WTC11 (cell line): ENCODE measurements at regions of chr6 and their contacts with region 1.

Region 1: DNA sequence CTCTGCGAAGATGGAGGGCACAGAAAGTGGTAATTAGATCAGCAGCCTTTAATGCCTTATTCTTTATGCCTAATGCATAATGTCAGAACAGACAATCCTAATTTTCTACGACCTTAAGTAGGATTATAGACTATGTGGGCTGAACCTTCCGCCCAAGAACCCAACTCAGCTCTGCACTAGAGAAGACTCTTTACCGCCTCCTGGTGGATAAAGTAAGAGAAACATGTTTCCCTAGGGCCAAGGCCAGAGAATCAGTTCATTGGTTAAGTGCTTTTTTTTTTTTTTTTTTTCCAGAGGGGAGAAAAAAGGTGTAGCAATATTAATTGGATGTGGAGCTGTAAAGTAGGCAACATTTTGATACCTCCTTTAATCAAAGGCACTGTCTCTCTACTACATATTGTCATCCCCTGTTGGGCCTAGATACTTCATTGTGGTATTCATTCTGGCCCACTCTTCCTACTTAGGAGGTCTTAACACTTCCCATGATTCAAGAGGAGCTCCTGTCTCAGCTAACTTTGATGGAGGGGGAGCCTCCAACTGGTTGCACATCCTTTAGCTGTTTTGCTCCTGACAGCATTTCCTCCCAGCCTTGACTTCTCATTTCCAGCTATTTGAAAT is 124.9 kb upstream of the NRN1 start:
- DNase-seq: peak; percentile 36
- ATAC-seq: peak; percentile 95
- H3K4me3 Mint-ChIP-seq: no peak overlapping the region
- H3K27ac Mint-ChIP-seq: no peak overlapping the region
- H3K4me1 Mint-ChIP-seq: 0 out of 2 replicates have a peak, but pooled peaks cover 2% of the 10 kb centered on the region
- H3K27me3 Mint-ChIP-seq: peaks cover 6% of the 10 kb centered on the region
- CTCF ChIP-seq: peak; percentile 61

Region 2: DNA sequence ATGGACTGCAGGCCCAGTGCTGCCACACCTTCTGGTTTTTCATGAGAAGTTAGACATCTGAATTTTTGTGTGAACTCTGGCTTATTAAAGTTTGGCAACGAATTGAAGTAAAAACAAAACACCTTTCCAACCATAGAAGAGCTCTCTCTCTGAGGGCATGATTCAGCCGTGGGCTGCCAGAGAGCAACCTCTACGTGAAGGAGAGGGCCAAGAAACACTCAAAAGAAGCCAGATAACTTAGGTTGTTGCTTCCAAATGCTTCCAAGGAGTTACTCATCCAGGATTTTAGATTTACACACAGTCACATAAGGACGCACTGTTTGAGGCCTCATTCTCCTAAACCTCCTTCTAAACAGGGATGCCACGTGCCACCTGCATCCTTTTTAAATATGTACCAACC is 190.4 kb before region 1 on chr6:
- CTCF ChIA-PET with region 1: no interaction called
- POLR2A ChIA-PET with region 1: no interaction called
- DNase-seq: no peak
- ATAC-seq: no peak
- H3K4me3 Mint-ChIP-seq: no peak overlapping the region
- H3K27ac Mint-ChIP-seq: no peak overlapping the region
- H3K4me1 Mint-ChIP-seq: no peaks in the 10 kb centered on the region
- H3K27me3 Mint-ChIP-seq: peaks cover 12% of the 10 kb centered on the region; the same call in 1 of the 2 replicates
- CTCF ChIP-seq: no peak

Region 3: DNA sequence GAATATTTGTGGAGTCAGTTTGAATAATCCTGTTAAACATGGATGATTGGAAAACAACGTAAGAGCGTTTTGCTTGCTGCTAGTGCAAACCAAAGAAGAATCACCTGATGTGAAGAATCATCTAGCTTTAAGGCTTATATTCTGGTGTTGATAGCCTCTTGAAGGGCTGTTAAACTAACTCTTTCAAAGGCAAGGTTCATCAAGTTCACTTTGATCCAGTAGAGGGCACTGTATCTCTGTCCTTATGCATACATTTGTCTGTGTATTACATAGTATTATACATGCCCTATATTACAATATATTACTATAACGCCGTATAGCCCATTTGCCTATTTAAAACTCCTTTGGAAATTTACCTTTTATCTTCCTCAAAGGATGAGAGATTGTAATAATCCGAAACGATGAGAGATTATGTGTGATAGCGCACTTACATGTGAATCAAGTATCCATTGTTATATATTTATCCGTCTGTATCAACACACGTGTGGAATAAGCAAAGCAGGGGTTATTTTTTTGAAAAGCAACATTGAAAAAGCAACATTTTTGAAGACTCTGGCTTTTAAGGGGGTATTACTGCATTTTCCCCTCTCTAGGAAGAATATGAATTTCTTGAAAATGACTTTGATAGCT is 74.1 kb before region 1 on chr6:
- CTCF ChIA-PET with region 1: interaction called, 21 read pairs
- POLR2A ChIA-PET with region 1: no interaction called
- DNase-seq: no peak
- ATAC-seq: peak; percentile 82
- H3K4me3 Mint-ChIP-seq: no peak overlapping the region
- H3K27ac Mint-ChIP-seq: no peak overlapping the region
- H3K4me1 Mint-ChIP-seq: no peaks in the 10 kb centered on the region
- H3K27me3 Mint-ChIP-seq: no peaks in the 10 kb centered on the region; the same call in 1 of the 2 replicates
- CTCF ChIP-seq: peak; percentile 29; the same call in 1 of the 2 replicates

Region 4: DNA sequence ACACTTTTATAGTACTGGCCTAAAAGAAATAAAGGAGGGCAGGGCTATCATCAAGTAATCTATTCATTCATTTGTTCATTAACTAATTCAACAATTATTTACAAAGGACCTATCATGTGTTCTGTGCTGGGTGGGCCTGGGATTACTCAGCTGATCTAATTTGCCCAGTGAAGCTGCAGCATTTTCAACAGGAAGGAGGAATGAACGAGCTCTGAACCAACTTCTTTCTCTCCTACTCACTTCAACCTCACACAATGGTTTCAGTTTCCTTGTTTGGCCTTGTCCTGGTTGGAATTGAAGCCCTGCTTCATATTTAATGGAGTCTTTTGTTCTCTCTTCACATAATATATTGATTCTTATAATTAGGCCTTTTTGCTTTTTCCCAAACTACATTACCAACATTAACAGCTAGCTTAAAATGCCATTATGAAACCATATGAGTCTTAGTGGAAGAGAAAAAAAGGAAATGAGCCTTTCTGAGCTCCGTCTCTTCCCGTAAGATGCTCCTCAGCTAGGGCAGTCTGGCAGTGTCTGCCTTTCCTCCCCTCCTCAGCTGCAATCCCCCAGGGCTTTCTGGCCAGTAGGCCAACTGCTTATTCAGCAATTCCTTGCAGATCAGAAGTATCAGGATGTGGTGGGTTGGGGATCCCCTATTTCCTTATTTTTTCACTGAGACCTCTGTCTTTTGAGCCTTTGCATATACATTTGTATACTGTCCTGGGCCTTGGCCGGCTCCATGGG is 45.5 kb before region 1 on chr6:
- CTCF ChIA-PET with region 1: no interaction called
- POLR2A ChIA-PET with region 1: no interaction called
- DNase-seq: no peak
- ATAC-seq: no peak
- H3K4me3 Mint-ChIP-seq: no peak overlapping the region
- H3K27ac Mint-ChIP-seq: no peak overlapping the region
- H3K4me1 Mint-ChIP-seq: no peaks in the 10 kb centered on the region
- H3K27me3 Mint-ChIP-seq: no peaks in the 10 kb centered on the region; the same call in 1 of the 2 replicates
- CTCF ChIP-seq: no peak

Region 5: DNA sequence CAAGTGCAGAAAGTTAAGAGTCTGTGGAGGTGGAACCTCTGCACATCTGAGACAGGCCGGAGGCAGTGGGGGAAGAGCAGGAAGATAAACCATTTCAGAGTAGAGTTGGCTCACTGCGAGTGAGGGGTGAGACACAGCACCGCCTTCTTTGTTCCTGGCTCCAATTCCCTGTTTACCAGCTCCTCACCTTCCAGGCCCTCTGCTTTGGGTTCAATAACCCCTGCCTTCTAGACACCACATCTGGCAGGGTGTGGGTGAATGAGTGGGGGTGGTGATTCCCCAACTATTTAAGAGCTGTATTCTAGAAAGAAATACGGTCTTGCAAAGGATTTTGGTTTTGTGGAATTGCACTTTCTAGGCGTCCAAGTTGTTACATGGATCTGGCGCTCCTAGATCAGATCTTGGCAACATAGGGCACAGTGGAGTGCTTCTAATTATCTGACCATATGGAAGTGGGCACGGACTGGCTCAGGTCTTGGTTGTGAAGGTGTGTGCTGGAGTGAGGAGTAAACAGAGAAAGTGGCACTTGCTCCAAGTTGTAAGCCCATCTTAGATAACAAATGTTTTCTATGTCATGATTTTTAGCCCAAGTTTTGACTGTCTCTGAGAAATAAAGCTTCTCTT is 16.7 kb after region 1 on chr6:
- CTCF ChIA-PET with region 1: interaction called, 12 read pairs
- POLR2A ChIA-PET with region 1: no interaction called
- DNase-seq: no peak
- ATAC-seq: no peak
- H3K4me3 Mint-ChIP-seq: no peak overlapping the region
- H3K27ac Mint-ChIP-seq: no peak overlapping the region
- H3K4me1 Mint-ChIP-seq: peaks cover 7% of the 10 kb centered on the region; the same call in 1 of the 2 replicates
- H3K27me3 Mint-ChIP-seq: no peaks in the 10 kb centered on the region; the same call in 1 of the 2 replicates
- CTCF ChIP-seq: no peak

Region 6: GRCh38 chr6:6461138-6461537 is 329.5 kb after region 1 on chr6:
- CTCF ChIA-PET with region 1: interaction called, 10 read pairs
- POLR2A ChIA-PET with region 1: no interaction called
- DNase-seq: no peak
- ATAC-seq: no peak
- H3K4me3 Mint-ChIP-seq: no peak overlapping the region
- H3K27ac Mint-ChIP-seq: no peak overlapping the region
- H3K4me1 Mint-ChIP-seq: no peaks in the 10 kb centered on the region
- H3K27me3 Mint-ChIP-seq: peaks cover 4% of the 10 kb centered on the region; the same call in 1 of the 2 replicates
- CTCF ChIP-seq: no peak